ENCODE measurements at regions of chr2 and their contacts with region 1.

Region 1: DNA sequence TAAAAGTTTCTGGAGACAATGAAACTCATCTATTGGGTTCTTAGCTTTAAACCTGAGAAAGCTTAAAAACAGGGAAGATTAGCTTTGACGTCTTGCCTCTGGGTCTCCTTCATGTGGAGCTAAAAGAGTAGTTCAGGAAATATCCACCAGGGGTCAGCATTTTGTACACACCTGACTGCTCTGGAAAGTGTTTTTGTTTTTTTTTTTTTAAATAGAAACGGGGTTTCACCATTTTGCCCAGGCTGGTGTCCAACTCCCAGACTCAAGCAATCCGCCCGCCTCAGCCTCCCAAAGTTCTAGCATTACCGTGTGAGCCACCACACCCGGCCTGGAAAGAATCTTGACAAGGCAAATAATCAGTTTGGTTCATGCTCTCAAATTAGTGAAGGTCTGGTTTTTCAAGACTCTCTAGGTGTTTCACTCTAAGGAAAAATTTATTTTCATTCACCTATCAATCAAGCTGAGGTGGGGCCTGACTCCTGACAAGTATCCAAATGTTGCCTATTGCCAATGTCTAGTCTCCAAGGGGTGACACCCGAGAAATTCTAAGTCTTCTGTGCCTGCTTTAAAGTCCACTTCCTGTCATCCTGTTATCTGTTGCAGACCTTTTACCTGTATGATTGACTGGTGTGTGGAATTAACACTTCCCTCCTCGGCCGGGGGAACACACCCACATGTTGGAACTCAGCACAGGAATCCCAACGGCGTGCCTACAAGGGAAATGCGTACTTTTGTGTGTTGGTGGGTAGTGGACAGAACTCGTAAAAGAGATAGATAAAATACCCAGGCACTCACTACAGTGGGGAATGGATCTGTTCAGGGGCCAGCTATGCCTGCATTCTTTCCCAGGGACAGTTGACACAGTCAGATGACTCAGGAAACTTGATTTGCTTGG is 11.3 kb downstream of the IL1RN start:
- DNase-seq: peak; percentile 11
- H3K4me3 ChIP-seq: no peak overlapping the region
- H3K27me3 ChIP-seq: no peaks in the 10 kb centered on the region
- CTCF ChIP-seq: peak; percentile 75

Region 2: DNA sequence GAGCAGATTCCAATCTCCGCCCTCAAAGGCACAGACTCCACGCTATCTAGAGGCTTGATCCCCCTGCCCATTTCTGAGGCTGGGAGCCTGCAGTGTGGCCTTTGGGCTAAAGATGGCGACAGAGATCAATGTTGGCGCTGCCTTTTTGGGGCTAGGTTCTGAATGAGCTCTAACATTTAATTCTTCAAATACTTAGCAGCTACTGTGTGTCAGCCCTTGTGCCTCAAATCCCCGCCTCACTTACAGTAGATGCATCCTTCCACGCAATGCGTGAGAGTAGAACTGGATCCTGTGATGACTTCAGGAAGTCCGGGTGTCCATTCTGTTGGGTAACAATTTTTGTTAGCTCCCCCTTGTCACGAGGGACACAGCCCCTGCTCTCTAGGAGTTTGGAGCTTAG is 58.5 kb before region 1 on chr2:
- CTCF ChIA-PET with region 1: interaction called, 18 read pairs
- POLR2A ChIA-PET with region 1: no interaction called
- DNase-seq: no peak
- H3K4me3 ChIP-seq: no peak overlapping the region
- H3K27me3 ChIP-seq: peaks cover 8% of the 10 kb centered on the region
- CTCF ChIP-seq: peak; percentile 77

Region 3: GRCh38 chr2:113148606-113149560 is 10.2 kb after region 1 on chr2:
- CTCF ChIA-PET with region 1: interaction called, 18 read pairs
- POLR2A ChIA-PET with region 1: no interaction called
- DNase-seq: no peak
- H3K4me3 ChIP-seq: no peak overlapping the region
- H3K27me3 ChIP-seq: no peaks in the 10 kb centered on the region; the same call in 1 of the 2 replicates
- CTCF ChIP-seq: no peak

Region 4: GRCh38 chr2:113198790-113199612 is 60.3 kb after region 1 on chr2:
- CTCF ChIA-PET with region 1: interaction called, 213 read pairs
- POLR2A ChIA-PET with region 1: no interaction called
- DNase-seq: no peak
- H3K4me3 ChIP-seq: peak overlapping the region; percentile 66
- H3K27me3 ChIP-seq: no peaks in the 10 kb centered on the region
- CTCF ChIP-seq: peak; percentile 67

Region 5: GRCh38 chr2:113264713-113265403 is 126.2 kb after region 1 on chr2:
- CTCF ChIA-PET with region 1: no interaction called
- POLR2A ChIA-PET with region 1: interaction called, 11 read pairs
- DNase-seq: no peak
- H3K4me3 ChIP-seq: no peak overlapping the region
- H3K27me3 ChIP-seq: peaks cover 5% of the 10 kb centered on the region
- CTCF ChIP-seq: no peak

Region 6: DNA sequence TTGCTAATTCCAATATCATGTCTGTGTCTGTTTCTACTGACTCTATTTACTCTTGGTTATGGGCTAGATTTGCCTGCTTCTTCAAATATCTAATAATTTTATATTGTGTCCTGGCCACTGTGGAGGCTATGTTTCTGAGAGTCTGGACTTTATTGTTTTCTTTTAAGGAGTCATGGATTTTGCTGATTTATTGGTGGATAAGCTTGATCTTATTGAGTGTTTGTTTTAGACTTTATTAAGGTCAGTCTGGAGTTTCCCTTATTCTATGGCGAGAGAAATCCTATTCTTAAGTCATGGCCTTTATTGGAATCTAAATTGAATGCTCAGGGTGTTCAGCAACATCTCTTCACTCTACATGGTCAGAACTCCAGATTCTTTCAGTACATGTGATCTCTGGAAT is 243.8 kb after region 1 on chr2:
- CTCF ChIA-PET with region 1: interaction called, 10 read pairs
- POLR2A ChIA-PET with region 1: interaction called, 3 read pairs
- DNase-seq: no peak
- H3K4me3 ChIP-seq: no peak overlapping the region
- H3K27me3 ChIP-seq: no peaks in the 10 kb centered on the region
- CTCF ChIP-seq: no peak